ENCODE measurements at regions of chr1 and their contacts with region 1.

Region 1: DNA sequence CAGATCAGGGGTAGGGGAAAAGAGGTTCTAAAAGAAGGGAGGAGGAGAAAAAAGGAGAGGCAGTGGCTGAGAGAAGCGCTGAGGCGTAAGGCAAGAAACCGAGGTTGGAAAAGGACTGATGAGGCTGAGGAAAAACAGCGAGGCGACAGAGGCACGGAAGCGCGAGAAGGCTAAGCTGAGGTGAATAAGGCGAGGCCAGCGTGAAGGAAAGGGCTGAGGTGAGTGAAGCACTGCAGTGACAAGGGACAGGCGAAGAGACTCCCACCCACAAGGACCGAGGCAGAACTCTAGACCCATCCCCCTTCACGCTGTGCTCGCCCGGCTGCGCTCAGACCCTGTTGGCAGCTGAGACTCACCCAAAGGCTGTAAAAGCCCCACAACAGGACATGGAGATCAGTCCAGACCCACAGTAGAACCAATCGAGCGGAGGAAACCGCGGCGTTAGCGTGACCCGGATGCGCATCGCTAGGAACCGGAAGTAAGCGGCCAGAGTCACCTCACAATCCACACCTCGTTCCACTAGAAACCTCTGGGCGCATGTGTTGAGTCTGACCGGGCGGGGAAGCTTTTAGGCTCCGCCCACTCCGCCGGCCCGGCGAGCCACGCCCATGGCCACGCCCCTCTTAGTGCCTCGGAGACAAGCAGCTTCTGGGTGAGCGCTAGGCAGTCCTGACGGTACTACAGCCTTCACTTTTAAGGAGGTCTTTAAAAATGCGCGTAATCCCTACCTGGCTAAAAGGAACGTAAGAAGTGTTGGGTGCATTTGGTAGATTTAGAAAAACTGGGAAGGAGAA is at the start of gene EYA3:
- DNase-seq: peak; percentile 100
- ATAC-seq: peak; percentile 93
- H3K4me3 Mint-ChIP-seq: peak within 1 kb of the TSS; percentile 96
- H3K27ac Mint-ChIP-seq: peak within 1 kb of the TSS; percentile 100
- H3K4me1 Mint-ChIP-seq: peaks cover 10% of the 10 kb centered on the region
- H3K27me3 Mint-ChIP-seq: no peaks in the 10 kb centered on the region
- CTCF ChIP-seq: no peak
- total RNA-seq, gene EYA3: 27.4 to 29.4 TPM (median 28.1 TPM) in 3 replicates

Region 2: GRCh38 chr1:28099050-28099769 is 10.8 kb after region 1 on chr1:
- CTCF ChIA-PET with region 1: interaction called, 39 read pairs
- POLR2A ChIA-PET with region 1: interaction called, 13 read pairs
- DNase-seq: no peak
- ATAC-seq: no peak
- H3K4me3 Mint-ChIP-seq: no peak overlapping the region
- H3K27ac Mint-ChIP-seq: no peak overlapping the region
- H3K4me1 Mint-ChIP-seq: no peaks in the 10 kb centered on the region
- H3K27me3 Mint-ChIP-seq: no peaks in the 10 kb centered on the region
- CTCF ChIP-seq: no peak

Region 3: DNA sequence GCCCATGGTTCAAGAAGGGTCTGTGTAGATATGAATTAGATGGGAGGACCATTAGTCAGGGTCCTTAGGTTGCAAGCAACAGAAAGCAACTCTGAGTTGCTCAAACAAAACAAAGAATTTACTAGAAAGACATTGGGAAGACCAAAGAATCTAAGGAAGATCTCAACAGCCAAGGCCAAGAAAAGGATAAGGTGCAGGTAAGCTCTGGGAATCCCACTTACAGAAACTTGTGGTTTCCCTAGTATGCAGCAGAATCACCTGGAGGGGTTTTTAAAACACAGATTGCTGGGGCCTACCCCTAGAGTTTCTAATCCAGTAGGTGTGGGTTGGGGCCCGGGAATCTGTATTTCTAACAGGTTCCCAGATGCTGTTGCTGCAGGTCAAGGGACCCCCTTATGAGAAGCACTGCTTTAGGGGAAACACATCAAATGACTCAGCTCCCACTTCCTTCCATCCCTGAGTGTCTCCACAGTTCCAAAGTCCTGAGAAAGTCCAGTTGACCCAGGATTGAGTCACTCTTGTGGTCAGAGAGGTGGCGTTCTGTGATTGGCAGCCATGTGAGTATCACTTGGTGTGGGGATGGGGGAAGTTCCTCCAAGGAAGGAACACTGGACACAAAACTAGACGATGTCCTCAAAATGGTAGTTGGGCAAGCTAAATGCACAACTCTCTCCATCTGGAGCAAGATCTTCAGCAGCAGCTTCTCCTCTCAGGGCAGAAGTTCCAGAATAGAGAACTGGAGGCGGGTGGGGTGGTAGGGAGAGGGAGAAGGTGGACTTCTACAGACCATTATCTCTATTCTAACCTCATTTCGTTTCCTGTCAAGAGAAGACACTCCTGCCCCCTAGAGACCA is 24.2 kb after region 1 on chr1:
- CTCF ChIA-PET with region 1: interaction called, 30 read pairs
- POLR2A ChIA-PET with region 1: interaction called, 3 read pairs
- DNase-seq: no peak
- ATAC-seq: no peak; the same call in 1 of the 2 replicates
- H3K4me3 Mint-ChIP-seq: no peak overlapping the region
- H3K27ac Mint-ChIP-seq: no peak overlapping the region
- H3K4me1 Mint-ChIP-seq: no peaks in the 10 kb centered on the region
- H3K27me3 Mint-ChIP-seq: no peaks in the 10 kb centered on the region
- CTCF ChIP-seq: no peak

Region 4: DNA sequence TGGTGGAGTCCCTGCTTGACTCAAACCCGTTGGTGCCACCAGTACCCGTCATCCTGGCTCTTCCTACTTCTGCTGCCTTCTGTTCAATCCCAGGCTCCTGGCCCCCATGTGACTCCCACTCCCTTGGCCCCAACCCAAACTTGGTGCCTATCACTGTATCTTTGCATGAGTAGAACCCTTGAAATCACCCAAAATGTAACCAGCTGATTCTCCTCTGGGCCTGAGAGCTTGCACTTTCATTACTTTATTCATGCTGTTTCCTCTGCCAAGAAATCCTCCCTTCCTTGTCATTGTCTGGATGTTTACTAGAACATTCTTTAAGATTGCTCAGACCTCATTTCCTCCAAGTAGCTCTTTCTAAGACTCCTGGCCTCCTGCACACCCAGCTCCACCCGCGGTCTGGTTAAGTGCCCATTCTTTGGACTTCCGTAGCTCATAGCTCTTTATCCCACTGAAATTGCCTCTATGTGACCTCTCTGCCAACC is 72.5 kb after region 1 on chr1:
- CTCF ChIA-PET with region 1: interaction called, 14 read pairs
- POLR2A ChIA-PET with region 1: no interaction called
- DNase-seq: no peak
- ATAC-seq: no peak
- H3K4me3 Mint-ChIP-seq: no peak overlapping the region
- H3K27ac Mint-ChIP-seq: no peak overlapping the region
- H3K4me1 Mint-ChIP-seq: peaks cover 8% of the 10 kb centered on the region
- H3K27me3 Mint-ChIP-seq: no peaks in the 10 kb centered on the region
- CTCF ChIP-seq: no peak

Region 5: GRCh38 chr1:28208818-28209441 is 120.6 kb after region 1 on chr1:
- CTCF ChIA-PET with region 1: interaction called, 50 read pairs
- POLR2A ChIA-PET with region 1: interaction called, 10 read pairs
- DNase-seq: peak; percentile 61
- ATAC-seq: peak; percentile 72
- H3K4me3 Mint-ChIP-seq: no peak overlapping the region
- H3K27ac Mint-ChIP-seq: peak overlapping the region; percentile 54
- H3K4me1 Mint-ChIP-seq: peaks cover 6% of the 10 kb centered on the region
- H3K27me3 Mint-ChIP-seq: no peaks in the 10 kb centered on the region
- CTCF ChIP-seq: no peak; the same call in 1 of the 2 replicates